AG04449 (cell line): ENCODE measurements at regions of chr1 and their contacts with region 1.

Region 1: GRCh38 chr1:41416552-41417334 is 55.5 kb downstream of the FOXO6 start:
- DNase-seq: no peak
- H3K4me3 ChIP-seq: no peak overlapping the region
- CTCF ChIP-seq: peak; percentile 94

Region 2: DNA sequence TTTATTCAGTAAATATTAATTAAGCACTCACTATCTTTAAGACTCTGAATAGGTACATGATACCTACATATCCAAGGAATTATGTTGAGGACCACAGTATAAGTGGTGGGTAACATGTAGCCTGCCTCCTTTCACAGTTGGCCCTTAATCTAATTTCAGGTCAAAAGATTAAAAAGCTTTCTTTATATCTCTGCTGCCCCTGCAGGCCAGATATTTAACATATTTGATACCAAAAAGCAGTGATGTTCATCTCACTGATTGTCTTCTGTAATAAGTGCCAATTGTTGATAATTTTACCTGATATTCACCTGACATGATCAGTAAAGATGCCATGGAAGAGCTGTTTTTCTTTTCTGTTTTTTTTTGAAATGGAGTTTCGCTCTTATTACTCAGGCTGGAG is 1219.1 kb before region 1 on chr1:
- CTCF ChIA-PET with region 1: no interaction called
- POLR2A ChIA-PET with region 1: no interaction called
- DNase-seq: no peak
- H3K4me3 ChIP-seq: no peak overlapping the region
- CTCF ChIP-seq: no peak

Region 3: GRCh38 chr1:40291293-40291692 is 1125.5 kb before region 1 on chr1:
- CTCF ChIA-PET with region 1: no interaction called
- POLR2A ChIA-PET with region 1: no interaction called
- DNase-seq: no peak
- H3K4me3 ChIP-seq: no peak overlapping the region
- CTCF ChIP-seq: no peak

Region 4: DNA sequence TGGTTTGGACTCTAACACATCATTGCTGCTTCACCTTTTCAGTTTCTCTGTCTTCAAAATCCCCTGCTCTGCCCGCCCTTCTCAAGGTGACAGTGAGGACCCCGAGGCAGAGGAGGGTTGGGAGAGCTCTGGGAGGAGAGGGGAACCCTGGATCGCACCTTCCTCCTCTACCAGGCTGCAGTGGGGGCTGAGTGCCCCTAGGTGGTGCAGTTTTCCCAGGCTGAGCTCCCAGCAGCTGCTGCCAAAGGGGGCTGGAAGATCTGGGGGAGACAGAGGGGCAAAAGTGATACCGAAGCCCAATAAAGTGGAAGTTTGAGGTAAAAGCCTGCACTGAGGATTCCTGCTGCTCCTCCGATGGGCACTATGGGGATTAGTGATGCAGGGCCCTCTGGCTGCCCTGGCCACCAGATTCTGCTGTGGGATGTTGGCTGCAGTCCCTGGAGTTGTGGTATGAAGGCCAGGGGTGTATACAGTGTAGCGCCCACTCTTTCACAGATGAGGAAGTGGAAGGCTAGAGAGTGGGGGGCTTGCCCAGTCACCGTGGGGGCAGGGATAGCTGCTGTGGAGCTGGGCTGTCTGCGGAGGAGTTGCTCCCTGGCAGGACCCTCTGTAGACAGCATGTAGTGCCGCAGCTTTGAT is 133.9 kb before region 1 on chr1:
- CTCF ChIA-PET with region 1: interaction called, 365 read pairs
- POLR2A ChIA-PET with region 1: no interaction called
- DNase-seq: no peak
- H3K4me3 ChIP-seq: no peak overlapping the region
- CTCF ChIP-seq: peak; percentile 93

Region 5: GRCh38 chr1:41313661-41314131 is 103.0 kb before region 1 on chr1:
- CTCF ChIA-PET with region 1: interaction called, 18 read pairs
- POLR2A ChIA-PET with region 1: no interaction called
- DNase-seq: no peak
- H3K4me3 ChIP-seq: no peak overlapping the region
- CTCF ChIP-seq: peak; percentile 23

Region 6: GRCh38 chr1:41349361-41350054 is 67.2 kb before region 1 on chr1:
- CTCF ChIA-PET with region 1: no interaction called
- POLR2A ChIA-PET with region 1: no interaction called
- DNase-seq: no peak
- H3K4me3 ChIP-seq: no peak overlapping the region
- CTCF ChIP-seq: no peak

Region 7: GRCh38 chr1:41390166-41390565 is 26.6 kb before region 1 on chr1:
- CTCF ChIA-PET with region 1: interaction called, 19 read pairs
- POLR2A ChIA-PET with region 1: no interaction called
- DNase-seq: no peak
- H3K4me3 ChIP-seq: no peak overlapping the region
- CTCF ChIP-seq: no peak

Region 8: GRCh38 chr1:41404308-41404761 is 12.4 kb before region 1 on chr1:
- CTCF ChIA-PET with region 1: interaction called, 18 read pairs
- POLR2A ChIA-PET with region 1: no interaction called
- DNase-seq: no peak
- H3K4me3 ChIP-seq: no peak overlapping the region
- CTCF ChIP-seq: no peak

Region 9: GRCh38 chr1:41516168-41517061 is 99.7 kb after region 1 on chr1:
- CTCF ChIA-PET with region 1: interaction called, 11 read pairs
- POLR2A ChIA-PET with region 1: no interaction called
- DNase-seq: no peak
- H3K4me3 ChIP-seq: peak overlapping the region; percentile 13
- CTCF ChIP-seq: peak; percentile 99